ENCODE measurements at regions of chr1 and their contacts with region 1.

Region 1: GRCh38 chr1:21261551-21262281 is 28.5 kb downstream of the ECE1 start:
- DNase-seq: peak; percentile 88 to 91 (median 88)
- ATAC-seq: peak; percentile 83 to 88
- H3K4me3 ChIP-seq: no peak overlapping the region
- H3K27ac ChIP-seq: peak overlapping the region; percentile 95
- H3K4me1 ChIP-seq: peaks cover 42% of the 10 kb centered on the region
- H3K27me3 ChIP-seq: no peaks in the 10 kb centered on the region

Region 2: DNA sequence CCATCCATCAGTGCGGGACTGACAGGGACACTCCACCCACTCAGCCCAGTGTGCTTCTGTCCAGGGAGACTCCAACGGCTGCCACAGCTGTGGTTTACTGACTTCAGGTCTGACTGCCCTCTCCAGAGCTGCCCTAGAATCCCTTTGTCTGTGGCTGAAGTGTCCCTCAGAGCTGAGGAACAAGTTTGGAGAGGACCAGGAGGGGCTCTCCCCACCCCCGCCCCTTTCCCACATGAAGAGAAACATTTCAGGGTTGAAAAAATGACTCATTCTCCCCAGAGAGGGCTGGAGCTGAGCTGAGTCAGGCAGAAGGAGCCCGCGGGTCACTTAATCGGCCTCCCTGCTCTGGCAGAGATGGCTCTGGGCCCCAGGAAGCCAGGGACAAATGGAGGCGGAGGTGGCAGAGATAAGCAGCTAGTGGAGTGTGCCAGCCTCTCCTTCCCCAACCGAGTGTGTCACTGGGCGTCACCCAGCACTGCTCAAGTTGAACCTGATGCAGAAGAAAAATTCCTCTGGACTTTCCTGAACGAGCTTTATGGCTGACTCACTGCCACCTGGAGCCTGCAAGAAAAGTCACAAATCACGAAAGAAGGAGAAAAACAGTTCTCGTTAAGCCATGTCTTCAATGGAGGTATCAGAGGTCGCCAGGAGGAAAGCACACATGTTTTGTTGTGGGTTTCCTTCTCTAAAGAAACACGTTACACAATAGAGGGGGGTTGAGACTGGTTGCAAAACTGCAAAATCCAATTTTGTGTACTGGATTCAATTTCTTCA is 62.8 kb after region 1 on chr1:
- intact Hi-C with region 1: loop called in 1 of 4 experiments (anchors 10 kb)
- DNase-seq: peak; percentile 92 to 93 (median 92)
- ATAC-seq: peak; percentile 77 to 86
- H3K4me3 ChIP-seq: no peak overlapping the region
- H3K27ac ChIP-seq: peak overlapping the region; percentile 89
- H3K4me1 ChIP-seq: peaks cover 57% of the 10 kb centered on the region
- H3K27me3 ChIP-seq: no peaks in the 10 kb centered on the region

Region 3: DNA sequence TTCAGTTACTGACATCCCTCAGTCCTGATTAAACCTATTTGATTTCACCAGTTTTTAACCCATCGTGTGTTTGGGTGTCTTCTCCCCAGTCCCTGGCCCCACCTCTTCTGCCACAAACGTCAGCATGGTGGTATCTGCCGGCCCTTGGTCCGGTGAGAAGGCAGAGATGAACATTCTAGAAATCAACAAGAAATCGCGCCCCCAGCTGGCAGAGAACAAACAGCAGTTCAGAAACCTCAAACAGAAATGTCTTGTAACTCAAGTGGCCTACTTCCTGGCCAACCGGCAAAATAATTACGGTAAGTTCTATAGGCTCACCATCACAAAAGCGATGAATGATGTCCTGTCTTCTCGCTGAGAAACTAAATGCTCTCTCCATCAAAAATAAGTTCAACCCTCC is 206.9 kb after region 1 on chr1:
- intact Hi-C with region 1: no loop called
- DNase-seq: no peak
- ATAC-seq: no peak
- H3K4me3 ChIP-seq: no peak overlapping the region
- H3K27ac ChIP-seq: no peak overlapping the region
- H3K4me1 ChIP-seq: peaks cover 5% of the 10 kb centered on the region
- H3K27me3 ChIP-seq: no peaks in the 10 kb centered on the region